ENCODE measurements at regions of chr6 and their contacts with region 1.

Region 1: DNA sequence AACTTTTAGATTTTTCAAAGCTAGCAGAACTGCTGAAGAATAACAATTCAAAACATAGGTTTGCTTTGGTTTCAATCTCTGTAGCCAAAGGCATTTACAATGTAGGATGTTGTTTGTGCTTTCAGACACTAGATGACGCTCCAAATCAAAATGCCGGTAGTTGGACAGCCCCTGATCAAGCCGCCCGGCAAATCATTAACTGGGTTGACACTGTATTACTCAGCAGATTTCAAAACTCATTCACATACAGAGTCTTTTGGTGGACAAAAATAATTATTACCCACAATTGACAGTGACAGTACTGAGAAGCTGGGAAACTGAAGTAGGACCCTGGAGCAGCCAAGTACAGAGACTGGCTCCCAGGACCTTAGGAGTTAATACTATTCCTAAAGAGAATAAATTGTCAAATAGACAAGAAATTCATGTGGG is 21.3 kb upstream of the HFE start:
- DNase-seq: peak in 2 of 3 donors; percentile 54 to 71
- ATAC-seq: peak; percentile 91
- H3K4me3 ChIP-seq: no peak overlapping the region
- H3K27ac ChIP-seq: no peak overlapping the region
- H3K4me1 ChIP-seq: no peaks in the 10 kb centered on the region
- H3K27me3 ChIP-seq: no peaks in the 10 kb centered on the region

Region 2: GRCh38 chr6:26097268-26097875 is 31.4 kb after region 1 on chr6:
- intact Hi-C with region 1: loop called (anchors 2 kb)
- DNase-seq: peak in 2 of 3 donors; percentile 33 to 73
- ATAC-seq: peak; percentile 76 to 79
- H3K4me3 ChIP-seq: no peak overlapping the region
- H3K27ac ChIP-seq: no peak overlapping the region
- H3K4me1 ChIP-seq: no peaks in the 10 kb centered on the region
- H3K27me3 ChIP-seq: no peaks in the 10 kb centered on the region